Activated B cell treated with CpG ODN at 0.5 μM for 24 hours (primary cell): ENCODE measurements at regions of chr9 and their contacts with region 1.

Region 1: DNA sequence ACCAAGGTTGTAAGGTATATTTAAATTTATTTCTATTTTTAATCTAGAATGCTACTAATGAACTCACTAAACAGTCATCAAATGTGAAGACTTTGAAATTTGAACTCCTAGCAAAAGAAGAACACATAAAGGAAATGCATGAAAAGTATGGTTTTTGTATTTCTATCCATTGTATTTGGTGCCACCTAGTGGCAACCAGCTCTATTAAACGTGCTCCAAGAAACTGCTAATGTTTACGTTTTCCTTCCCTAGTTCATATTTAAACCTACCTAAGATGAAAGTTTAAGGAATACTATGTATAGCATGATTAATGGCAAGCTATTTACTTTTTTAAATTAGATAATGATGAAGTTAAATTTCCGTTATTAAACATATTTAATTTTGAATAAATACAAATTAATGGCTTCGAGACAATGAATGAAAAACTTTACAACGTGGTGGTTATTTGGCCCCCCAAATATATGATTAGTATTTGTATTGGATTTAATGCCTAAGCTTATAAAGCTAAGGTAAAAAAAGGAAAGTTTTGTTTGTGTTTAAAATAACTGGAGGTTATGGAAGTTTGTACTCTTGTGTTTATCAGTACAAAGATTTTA is 115.9 kb upstream of the SH3GL2 start:
- DNase-seq: no peak
- ATAC-seq: no peak
- H3K4me3 Mint-ChIP-seq: no peak overlapping the region
- H3K27ac Mint-ChIP-seq: no peak overlapping the region
- H3K4me1 Mint-ChIP-seq: no peaks in the 10 kb centered on the region
- H3K27me3 Mint-ChIP-seq: no peaks in the 10 kb centered on the region
- CTCF ChIP-seq: peak; percentile 48

Region 2: DNA sequence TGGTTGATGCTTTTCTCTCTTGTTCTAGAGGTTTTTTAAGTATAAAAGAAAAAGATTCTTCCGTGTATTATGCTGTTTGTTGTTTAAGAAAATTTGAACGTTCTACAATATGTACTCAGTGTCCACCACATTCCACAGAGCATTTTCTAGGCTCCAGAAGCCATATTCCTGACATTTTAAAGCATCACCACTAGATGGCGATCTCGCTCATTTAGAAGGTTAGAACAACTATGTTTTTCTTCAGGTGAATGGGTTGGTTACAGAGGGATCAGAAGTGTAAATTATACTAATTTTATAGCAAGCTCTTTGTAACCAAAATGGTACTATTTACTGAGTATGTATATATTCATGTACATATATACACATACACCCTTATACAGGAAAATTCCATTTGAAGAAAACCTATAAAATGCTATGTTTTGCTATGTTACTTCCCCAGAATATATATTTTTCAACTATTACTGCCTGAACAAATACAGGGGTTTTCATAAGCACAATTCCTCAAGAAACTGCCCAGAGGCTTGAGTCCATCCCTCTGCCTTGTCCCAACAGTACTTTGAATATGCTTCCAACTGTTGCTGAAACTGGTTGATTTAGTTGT is 1625.8 kb before region 1 on chr9:
- CTCF ChIA-PET with region 1: no interaction called
- POLR2A ChIA-PET with region 1: no interaction called
- intact Hi-C with region 1: loop called (anchors 1 kb)
- DNase-seq: no peak
- ATAC-seq: no peak
- H3K4me3 Mint-ChIP-seq: no peak overlapping the region
- H3K27ac Mint-ChIP-seq: no peak overlapping the region
- H3K4me1 Mint-ChIP-seq: no peaks in the 10 kb centered on the region
- H3K27me3 Mint-ChIP-seq: no peaks in the 10 kb centered on the region
- CTCF ChIP-seq: peak; percentile 64

Region 3: GRCh38 chr9:15873569-15874177 is 1589.3 kb before region 1 on chr9:
- CTCF ChIA-PET with region 1: interaction called, 8 read pairs
- POLR2A ChIA-PET with region 1: no interaction called
- intact Hi-C with region 1: loop called (anchors 1 kb)
- DNase-seq: no peak
- ATAC-seq: no peak
- H3K4me3 Mint-ChIP-seq: no peak overlapping the region
- H3K27ac Mint-ChIP-seq: no peak overlapping the region
- H3K4me1 Mint-ChIP-seq: no peaks in the 10 kb centered on the region
- H3K27me3 Mint-ChIP-seq: no peaks in the 10 kb centered on the region
- CTCF ChIP-seq: peak; percentile 56

Region 4: DNA sequence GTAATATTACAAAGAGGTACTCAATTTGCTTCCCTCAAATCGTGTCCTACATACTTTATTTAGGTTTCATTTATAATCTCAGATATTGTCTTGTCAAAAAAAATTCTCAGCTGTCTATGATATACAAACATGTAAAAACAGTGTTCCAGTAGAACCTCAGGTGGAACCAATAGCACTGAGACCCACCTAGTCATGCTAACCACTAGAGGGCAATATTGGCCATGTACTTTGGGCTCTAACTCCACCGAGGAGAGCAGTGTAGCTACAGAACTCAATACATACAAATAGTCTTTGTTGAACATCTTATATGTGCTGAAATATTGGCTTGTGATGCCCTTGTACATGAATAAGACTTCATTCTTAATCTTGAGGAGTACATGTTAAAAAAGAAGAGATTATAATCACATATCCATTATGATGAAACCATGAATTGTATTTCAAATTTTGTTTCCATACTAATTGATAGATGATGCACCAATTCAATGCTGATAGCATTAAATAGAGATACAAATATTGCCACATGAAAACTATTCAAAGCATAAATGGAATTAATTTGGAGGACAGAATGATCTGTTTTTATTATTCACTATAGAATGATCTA is 399.3 kb before region 1 on chr9:
- CTCF ChIA-PET with region 1: interaction called, 7 read pairs
- POLR2A ChIA-PET with region 1: no interaction called
- intact Hi-C with region 1: loop called (anchors 1 kb)
- DNase-seq: no peak
- ATAC-seq: no peak
- H3K4me3 Mint-ChIP-seq: no peak overlapping the region
- H3K27ac Mint-ChIP-seq: no peak overlapping the region
- H3K4me1 Mint-ChIP-seq: no peaks in the 10 kb centered on the region
- H3K27me3 Mint-ChIP-seq: no peaks in the 10 kb centered on the region
- CTCF ChIP-seq: no peak

Region 5: DNA sequence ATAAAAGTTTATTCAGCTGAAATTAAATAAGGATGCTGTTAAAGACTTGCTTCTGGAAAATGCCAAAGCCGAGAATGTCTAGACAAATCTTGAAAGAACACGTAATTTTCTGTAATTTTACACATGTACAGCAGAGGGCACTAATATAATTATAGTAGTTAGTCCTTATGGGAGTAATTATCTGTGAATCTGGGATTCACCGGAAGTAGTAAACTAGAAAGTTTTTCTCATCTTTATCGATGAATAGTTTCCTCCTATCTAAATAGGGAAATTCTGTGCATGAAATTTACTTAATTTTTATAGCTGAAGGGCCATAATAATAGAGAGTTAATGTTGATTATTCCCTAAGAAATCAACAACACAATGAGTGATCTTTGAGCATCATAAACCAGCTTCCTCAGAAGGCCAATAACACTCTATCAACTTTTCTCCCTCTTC is 346.5 kb before region 1 on chr9:
- CTCF ChIA-PET with region 1: interaction called, 11 read pairs
- POLR2A ChIA-PET with region 1: no interaction called
- intact Hi-C with region 1: loop called (anchors 1 kb)
- DNase-seq: no peak
- ATAC-seq: no peak
- H3K4me3 Mint-ChIP-seq: no peak overlapping the region
- H3K27ac Mint-ChIP-seq: no peak overlapping the region
- H3K4me1 Mint-ChIP-seq: no peaks in the 10 kb centered on the region
- H3K27me3 Mint-ChIP-seq: no peaks in the 10 kb centered on the region
- CTCF ChIP-seq: no peak